AG04449 (cell line): ENCODE measurements at regions of chr3 and their contacts with region 1.

Region 1: GRCh38 chr3:179750720-179751328 is 98.0 kb downstream of the USP13 start:
- DNase-seq: no peak
- H3K4me3 ChIP-seq: no peak overlapping the region
- CTCF ChIP-seq: peak; percentile 64

Region 2: GRCh38 chr3:179716811-179717210 is 34.0 kb before region 1 on chr3:
- CTCF ChIA-PET with region 1: interaction called, 13 read pairs
- POLR2A ChIA-PET with region 1: no interaction called
- DNase-seq: peak; percentile 74
- H3K4me3 ChIP-seq: no peak overlapping the region
- CTCF ChIP-seq: no peak

Region 3: DNA sequence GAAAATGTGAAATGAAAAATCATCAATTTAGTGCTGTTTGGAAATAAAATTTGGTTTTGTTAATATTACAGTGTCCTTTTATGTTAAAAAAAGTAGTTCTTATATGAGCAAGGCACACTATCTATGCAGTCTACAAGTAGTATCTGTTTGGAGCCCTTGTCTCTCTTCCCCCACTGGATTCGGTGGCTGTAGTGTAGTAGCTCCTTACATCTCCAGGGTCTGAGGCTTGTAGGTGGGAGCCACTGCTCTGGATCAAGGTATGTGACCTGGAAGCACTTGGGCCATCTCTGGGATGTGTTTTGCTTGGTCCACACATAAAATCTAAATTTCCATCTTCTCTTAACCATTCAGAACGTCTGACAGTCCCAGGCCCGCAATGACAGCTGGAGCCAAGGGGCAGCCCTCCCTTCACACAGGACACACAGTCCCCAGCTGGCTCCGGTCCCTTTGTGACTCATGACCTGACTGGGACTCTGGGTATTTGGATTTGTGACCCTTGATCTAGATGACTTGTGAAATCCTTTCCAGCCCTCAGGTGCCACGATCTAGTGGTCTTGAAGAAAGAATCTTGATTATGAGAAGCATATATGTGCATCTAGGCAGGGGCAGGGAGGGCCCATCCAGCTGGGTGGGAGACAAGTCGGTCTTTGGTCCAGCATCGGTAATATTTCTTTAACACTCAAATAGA is 18.0 kb before region 1 on chr3:
- CTCF ChIA-PET with region 1: interaction called, 14 read pairs
- POLR2A ChIA-PET with region 1: no interaction called
- DNase-seq: no peak
- H3K4me3 ChIP-seq: no peak overlapping the region
- CTCF ChIP-seq: no peak

Region 4: GRCh38 chr3:179760944-179761343 is 10.1 kb after region 1 on chr3:
- CTCF ChIA-PET with region 1: interaction called, 15 read pairs
- POLR2A ChIA-PET with region 1: no interaction called
- DNase-seq: no peak
- H3K4me3 ChIP-seq: no peak overlapping the region
- CTCF ChIP-seq: no peak

Region 5: DNA sequence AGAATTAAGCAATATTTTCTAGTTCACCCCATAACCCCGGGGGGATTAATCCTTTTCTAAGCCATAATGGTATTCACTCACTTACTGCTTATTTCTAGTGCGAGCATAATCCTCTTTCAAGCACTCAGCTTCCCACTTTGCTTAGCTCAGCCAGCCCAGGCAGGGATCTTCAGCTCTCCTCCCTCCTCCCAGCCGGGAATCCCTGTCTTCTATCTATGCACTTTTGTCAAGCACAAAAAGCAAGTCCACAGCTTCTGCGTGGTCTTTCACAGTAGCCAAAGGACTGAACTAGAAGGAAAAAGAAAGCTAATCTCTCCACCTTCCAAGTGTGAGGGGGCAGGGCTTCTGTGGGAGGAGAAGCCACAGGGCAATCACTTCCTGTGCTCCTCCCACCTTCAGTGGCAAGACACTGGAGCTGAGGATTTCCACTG is 223.1 kb after region 1 on chr3:
- CTCF ChIA-PET with region 1: no interaction called
- POLR2A ChIA-PET with region 1: no interaction called
- DNase-seq: no peak
- H3K4me3 ChIP-seq: no peak overlapping the region
- CTCF ChIP-seq: no peak